Mammary epithelial cell (primary cell): ENCODE measurements at regions of chr22 and their contacts with region 1.

Region 1: GRCh38 chr22:32606181-32606580 is 131.6 kb downstream of the FBXO7 start:
- DNase-seq: no peak
- H3K4me3 ChIP-seq: no peak overlapping the region
- H3K27ac ChIP-seq: no peak overlapping the region
- H3K4me1 ChIP-seq: peaks cover 15% of the 10 kb centered on the region
- H3K27me3 ChIP-seq: no peaks in the 10 kb centered on the region
- CTCF ChIP-seq: no peak

Region 2: DNA sequence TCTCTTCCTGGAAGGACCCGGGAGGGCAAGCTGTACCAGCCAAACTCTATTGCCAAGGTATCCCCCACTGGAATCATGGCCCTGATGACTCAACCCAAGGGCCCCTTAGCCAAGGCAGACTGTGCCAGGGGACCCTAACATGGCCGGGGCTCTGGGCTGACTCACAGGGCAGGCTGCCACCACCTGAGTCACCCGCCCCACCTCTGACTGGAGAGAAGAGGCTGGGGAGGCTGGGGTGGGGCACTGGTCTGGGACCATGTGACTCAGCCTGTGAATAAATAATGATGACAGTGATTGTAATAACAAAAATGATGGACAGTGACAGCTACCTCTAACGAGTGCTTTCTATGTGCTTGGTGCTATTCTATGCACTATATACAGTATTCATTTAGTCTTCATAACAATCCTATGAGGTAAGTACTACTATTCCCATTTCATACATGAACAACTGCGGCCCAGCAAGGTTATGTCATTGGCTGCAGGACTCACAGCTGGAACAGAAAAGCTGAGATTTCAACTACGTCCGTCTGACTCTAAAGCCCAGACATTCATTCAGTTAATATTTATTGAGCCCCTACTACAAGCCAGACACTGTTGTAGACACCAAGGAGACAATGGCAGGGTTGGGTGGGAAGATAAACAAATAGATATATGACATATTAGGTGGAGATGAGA is 47.4 kb before region 1 on chr22:
- CTCF ChIA-PET with region 1: no interaction called
- dilution Hi-C with region 1: no loop called
- in situ Hi-C with region 1: no loop called
- intact Hi-C with region 1: loop called (anchors 5 kb)
- DNase-seq: peak; percentile 94
- H3K4me3 ChIP-seq: no peak overlapping the region
- H3K27ac ChIP-seq: no peak overlapping the region
- H3K4me1 ChIP-seq: peaks cover 23% of the 10 kb centered on the region
- H3K27me3 ChIP-seq: no peaks in the 10 kb centered on the region
- CTCF ChIP-seq: no peak

Region 3: DNA sequence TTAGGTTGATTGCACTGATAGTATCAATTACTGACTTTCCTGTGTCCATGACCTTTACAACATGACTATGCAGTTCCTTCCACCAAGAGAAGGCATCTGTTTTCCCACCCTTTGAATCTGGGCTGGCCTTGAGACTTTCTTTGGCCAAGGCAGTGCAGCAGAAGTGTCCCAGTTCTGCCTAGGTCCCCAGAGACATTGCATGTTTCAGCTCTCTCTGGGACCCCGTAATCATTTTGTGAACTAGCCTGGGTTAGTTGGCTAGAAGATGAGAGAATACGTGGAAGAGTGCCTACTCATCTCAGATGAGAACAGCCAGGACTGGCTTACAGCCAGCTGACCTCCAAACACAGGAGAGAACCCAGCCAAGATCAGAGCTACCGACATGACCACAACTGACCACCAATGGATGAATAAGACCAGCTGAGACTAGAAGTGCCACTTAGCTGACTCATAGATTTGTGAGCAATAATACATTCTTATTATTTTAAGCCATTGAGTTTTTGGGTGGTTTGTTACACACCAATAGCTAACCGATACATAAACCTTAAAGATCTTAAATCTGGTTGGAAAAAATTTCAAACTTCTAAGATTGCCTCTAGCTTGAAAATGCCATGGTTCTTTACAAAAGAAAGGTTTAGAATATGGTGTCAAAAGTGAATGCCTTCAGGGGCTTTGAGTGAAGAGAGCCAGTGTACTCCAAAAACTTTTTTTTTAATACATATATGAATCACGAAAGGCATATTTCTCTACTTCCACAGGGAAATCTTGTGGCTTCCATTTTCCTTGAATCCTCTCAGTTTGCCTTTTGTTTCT is 13.6 kb after region 1 on chr22:
- CTCF ChIA-PET with region 1: interaction called, 3 read pairs
- dilution Hi-C with region 1: no loop called
- in situ Hi-C with region 1: no loop called
- intact Hi-C with region 1: loop called (anchors 1 kb)
- DNase-seq: peak; percentile 69
- H3K4me3 ChIP-seq: no peak overlapping the region
- H3K27ac ChIP-seq: no peak overlapping the region
- H3K4me1 ChIP-seq: no peaks in the 10 kb centered on the region
- H3K27me3 ChIP-seq: no peaks in the 10 kb centered on the region
- CTCF ChIP-seq: no peak